ENCODE measurements at regions of chr7 and their contacts with region 1.

Region 1: GRCh38 chr7:140653319-140654108 is 12.9 kb upstream of the DENND2A start:
- DNase-seq: peak; percentile 47
- ATAC-seq: no peak
- H3K4me3 Mint-ChIP-seq: no peak overlapping the region
- H3K27ac Mint-ChIP-seq: no peak overlapping the region
- H3K4me1 Mint-ChIP-seq: peaks cover 18% of the 10 kb centered on the region
- H3K27me3 Mint-ChIP-seq: peaks cover 29% of the 10 kb centered on the region

Region 2: GRCh38 chr7:140517546-140518369 is 135.8 kb before region 1 on chr7:
- CTCF ChIA-PET with region 1: interaction called, 13 read pairs
- DNase-seq: peak; percentile 78
- ATAC-seq: peak; percentile 79
- H3K4me3 Mint-ChIP-seq: no peak overlapping the region
- H3K27ac Mint-ChIP-seq: no peak overlapping the region
- H3K4me1 Mint-ChIP-seq: peaks cover 4% of the 10 kb centered on the region
- H3K27me3 Mint-ChIP-seq: peaks cover 28% of the 10 kb centered on the region

Region 3: DNA sequence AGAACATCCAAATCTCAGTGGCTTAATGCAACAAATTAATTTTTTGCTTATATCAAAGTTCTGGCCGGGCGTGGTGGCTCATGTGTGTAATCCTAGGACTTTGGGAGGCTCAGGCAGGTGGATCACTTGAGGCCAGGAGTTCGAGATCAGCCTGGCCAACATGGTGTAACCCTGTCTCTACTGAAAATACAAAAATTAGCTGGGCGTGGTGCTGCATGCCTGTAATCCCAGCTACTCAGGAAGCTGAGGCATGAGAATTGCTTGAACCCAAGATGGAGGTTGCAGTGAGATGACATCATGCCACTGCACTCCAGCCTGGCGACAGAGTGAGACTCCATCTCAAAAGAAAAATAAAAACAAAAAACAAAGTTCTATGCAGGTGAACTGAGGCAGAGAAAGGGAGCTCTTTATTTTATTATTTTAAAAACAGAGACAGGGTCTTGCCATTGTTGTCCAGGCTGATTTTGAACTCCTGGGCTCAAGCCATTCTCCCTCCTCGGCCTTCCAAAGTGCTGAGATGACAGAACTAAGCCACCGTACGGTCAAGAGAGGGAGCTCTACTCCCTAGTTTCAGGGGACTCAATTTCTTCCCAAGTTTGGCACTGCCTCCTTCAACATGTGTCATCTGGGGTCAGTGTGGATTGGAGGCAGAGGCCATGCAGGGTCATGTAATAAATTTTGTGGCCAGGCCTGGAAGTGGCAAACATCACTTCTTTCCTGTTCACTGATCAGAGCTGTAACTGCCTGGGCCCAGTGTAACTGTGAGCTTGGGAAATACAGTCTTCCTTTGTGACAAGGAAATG is 21.6 kb after region 1 on chr7:
- CTCF ChIA-PET with region 1: no interaction called
- DNase-seq: no peak
- ATAC-seq: no peak
- H3K4me3 Mint-ChIP-seq: peak overlapping the region; percentile 10
- H3K27ac Mint-ChIP-seq: peak overlapping the region; percentile 37
- H3K4me1 Mint-ChIP-seq: peaks cover 33% of the 10 kb centered on the region
- H3K27me3 Mint-ChIP-seq: no peaks in the 10 kb centered on the region

Region 4: GRCh38 chr7:140732436-140732835 is 78.9 kb after region 1 on chr7:
- CTCF ChIA-PET with region 1: no interaction called
- DNase-seq: no peak
- ATAC-seq: no peak
- H3K4me3 Mint-ChIP-seq: no peak overlapping the region
- H3K27ac Mint-ChIP-seq: no peak overlapping the region
- H3K4me1 Mint-ChIP-seq: no peaks in the 10 kb centered on the region
- H3K27me3 Mint-ChIP-seq: no peaks in the 10 kb centered on the region

Measured in activated CD8-positive, alpha-beta memory T cell treated with anti-CD3 and anti-CD28 coated beads, Interleukin-2, amount 10 ng/mL, durations not matched to agents 7 days and 5 days (primary cell).